HEK293T (cell line): ENCODE measurements at regions of chr9 and their contacts with region 1.

Region 1: GRCh38 chr9:113340017-113340699 is at the start of gene WDR31:
- DNase-seq: peak; percentile 92

Region 2: GRCh38 chr9:113261917-113262671 is 78.1 kb before region 1 on chr9:
- CTCF ChIA-PET with region 1: no interaction called
- POLR2A ChIA-PET with region 1: no interaction called
- DNase-seq: no peak

Region 3: DNA sequence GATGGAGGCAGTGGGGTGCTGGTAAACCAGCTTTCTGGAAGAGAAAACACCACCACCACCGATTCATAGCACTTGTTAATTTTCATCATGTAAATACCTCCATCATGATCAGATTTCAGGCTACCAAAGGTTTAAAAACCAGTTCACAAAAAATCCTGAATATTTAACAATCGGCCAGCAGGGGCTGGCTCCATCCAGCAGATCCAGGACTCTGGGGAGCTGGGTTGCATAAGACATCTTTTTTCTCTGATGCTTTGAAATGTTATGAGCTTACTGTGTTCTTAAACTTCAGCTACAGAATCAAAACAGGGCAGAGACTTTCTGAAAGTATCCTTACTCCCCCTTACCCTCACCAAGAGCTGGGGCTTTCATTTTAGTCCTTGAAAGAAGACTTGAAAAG is 22.4 kb before region 1 on chr9:
- CTCF ChIA-PET with region 1: no interaction called
- POLR2A ChIA-PET with region 1: interaction called, 18 read pairs
- DNase-seq: no peak

Region 4: GRCh38 chr9:113361304-113362018 is 21.3 kb after region 1 on chr9:
- CTCF ChIA-PET with region 1: interaction called, 3 read pairs
- POLR2A ChIA-PET with region 1: interaction called, 15 read pairs
- DNase-seq: no peak

Region 5: DNA sequence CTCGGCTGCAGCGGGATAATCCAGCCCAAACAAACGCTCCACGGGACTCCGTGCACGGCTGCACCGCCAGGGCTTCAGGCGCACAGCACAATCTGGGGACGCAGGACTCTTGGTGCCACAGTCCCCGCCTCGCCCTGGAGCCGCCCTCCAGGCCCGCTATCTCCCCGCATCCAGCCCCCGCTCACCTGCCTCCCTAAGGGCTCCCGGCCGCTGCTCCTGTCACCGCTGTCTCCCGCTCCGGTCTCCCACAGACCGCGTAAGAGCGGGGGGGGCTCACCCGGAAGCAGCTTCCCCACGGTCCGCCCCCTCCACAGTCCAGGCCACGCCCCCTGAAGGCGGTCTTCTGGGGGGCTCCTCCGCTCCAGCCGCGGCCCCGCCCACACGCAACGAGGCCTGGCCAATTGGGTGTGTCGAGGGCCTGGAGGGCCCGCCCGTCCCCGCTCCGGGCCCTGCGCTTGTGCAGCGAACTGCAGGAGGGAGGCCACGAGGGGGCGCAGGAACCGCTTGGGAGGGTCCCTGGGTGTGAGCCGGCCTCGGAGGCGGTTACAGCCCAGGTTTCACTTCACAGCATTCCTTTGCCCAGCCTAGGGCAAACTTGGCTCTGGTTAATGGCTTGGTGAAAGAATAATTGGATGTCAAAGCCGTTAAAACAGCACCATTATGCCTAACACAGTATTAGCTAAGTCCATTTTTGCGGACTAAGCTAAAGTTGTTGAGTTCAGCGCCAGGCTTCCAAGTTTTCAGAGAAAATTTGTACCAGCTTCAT is 61.1 kb after region 1 on chr9 and contains the start of gene ALAD:
- CTCF ChIA-PET with region 1: interaction called, 3 read pairs
- POLR2A ChIA-PET with region 1: interaction called, 16 read pairs
- DNase-seq: peak; percentile 98